ENCODE measurements at regions of chr11 and their contacts with region 1.

Region 1: DNA sequence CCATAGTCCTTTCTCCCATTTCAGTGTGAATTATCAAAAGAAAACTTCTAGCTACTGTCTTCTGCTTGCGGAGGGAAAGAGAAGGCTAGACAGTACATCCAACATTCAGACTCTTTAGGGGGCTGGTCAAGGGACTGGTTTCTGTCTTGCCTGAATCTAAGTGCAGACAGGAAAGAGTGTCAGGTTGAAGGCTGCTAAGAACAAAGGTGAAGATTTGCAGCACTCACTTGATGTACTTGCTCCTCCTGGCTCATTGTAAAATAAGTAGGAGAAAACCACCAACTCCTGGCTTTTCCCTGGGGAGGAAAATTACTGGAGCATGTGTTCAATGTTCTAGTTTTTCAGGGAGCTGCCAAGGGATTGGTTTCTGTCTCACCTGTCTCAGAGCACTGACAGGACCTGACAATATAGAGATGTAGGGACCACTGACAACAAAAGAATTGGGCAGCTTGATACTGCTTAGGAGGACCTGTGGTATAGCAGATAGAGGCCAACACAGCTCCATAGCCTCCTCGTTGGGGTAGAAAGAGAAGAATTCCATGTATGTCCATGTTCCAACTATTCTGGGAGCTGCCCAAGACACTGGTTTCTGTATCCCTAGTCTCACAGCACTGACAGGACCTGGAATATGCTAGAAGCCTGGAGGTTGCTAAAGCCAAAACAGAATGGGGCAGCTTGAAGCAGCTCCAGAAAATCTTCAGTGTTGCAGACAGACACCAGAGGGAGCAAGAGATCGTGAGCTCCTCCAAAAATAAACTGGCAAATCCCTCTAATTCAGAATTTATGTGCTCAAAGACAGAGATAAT is 39.7 kb upstream of the MMP12 start:
- DNase-seq: no peak
- H3K4me3 ChIP-seq: no peak overlapping the region
- H3K27me3 ChIP-seq: no peaks in the 10 kb centered on the region
- CTCF ChIP-seq: peak; percentile 80

Region 2: DNA sequence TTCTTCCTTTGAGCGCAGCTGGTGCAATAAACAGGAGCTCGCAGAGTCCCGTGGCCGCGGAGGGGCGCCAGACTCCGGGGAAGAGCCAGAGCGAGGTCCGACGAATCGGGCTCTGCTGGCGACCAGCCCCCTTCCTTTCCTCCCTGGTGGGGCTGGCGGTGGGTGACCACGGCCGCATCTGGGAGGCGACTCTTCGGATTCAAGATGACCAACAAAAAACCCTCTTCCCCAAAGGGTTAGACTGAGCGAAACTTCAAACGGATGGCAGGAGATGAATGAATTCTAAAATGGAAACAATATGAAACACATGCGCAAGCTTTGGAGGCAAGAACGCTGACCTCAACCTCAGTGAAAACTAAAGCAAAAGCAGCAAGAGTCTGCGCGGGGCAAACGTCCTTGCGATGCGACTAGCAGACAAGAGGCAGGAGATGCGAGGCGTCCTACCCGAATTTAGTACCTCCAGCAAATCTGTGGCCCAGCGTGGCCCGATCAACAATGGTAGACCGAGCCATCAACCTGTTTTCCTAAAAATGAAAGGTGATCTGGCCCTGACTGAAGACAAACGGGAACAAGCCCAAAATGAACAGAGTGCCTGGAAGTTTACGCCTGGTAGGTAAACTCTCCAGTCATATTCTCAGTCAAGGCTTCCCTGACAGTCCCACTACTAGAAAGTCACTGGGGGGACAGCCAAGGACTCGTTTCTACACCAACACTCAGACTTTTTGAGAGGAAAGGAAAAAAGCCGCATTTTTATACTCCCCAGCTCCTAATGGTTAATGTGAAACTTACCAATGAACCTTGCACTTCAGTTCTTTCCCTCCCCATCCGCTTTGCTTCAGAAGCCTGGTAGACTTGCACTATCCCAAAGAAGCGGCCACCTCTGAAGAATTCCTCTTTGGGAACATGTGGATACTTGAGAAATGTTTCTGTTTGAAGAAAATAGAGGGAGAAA is 82.7 kb before region 1 on chr11:
- CTCF ChIA-PET with region 1: interaction called, 31 read pairs
- POLR2A ChIA-PET with region 1: no interaction called
- DNase-seq: no peak
- H3K4me3 ChIP-seq: peak overlapping the region; percentile 43
- H3K27me3 ChIP-seq: no peaks in the 10 kb centered on the region
- CTCF ChIP-seq: peak; percentile 83

Region 3: DNA sequence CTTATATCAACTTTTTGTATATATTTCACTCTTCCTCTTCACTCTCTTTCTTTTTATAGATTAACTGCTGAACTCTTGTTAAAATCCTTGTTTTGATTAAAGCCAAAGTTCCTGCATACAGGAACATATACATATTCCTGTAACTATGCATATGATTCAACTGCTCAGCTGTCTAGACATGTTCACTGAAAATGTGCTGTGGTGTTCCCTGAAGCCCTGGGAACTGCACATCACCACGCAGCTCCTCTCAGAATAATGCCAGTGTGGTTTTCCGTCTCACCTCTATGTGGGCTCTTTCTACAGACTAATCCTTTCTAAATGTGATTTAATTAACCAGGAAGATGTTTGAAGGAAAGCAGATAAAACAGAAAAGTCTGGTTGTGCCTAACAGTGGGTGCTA is 14.1 kb before region 1 on chr11:
- CTCF ChIA-PET with region 1: interaction called, 14 read pairs
- POLR2A ChIA-PET with region 1: no interaction called
- DNase-seq: no peak
- H3K4me3 ChIP-seq: no peak overlapping the region
- H3K27me3 ChIP-seq: no peaks in the 10 kb centered on the region
- CTCF ChIP-seq: no peak

Region 4: GRCh38 chr11:102935514-102935913 is 21.1 kb after region 1 on chr11:
- CTCF ChIA-PET with region 1: interaction called, 52 read pairs
- POLR2A ChIA-PET with region 1: no interaction called
- DNase-seq: no peak
- H3K4me3 ChIP-seq: no peak overlapping the region
- H3K27me3 ChIP-seq: no peaks in the 10 kb centered on the region
- CTCF ChIP-seq: peak; percentile 18; the same call in 1 of the 2 replicates

Region 5: DNA sequence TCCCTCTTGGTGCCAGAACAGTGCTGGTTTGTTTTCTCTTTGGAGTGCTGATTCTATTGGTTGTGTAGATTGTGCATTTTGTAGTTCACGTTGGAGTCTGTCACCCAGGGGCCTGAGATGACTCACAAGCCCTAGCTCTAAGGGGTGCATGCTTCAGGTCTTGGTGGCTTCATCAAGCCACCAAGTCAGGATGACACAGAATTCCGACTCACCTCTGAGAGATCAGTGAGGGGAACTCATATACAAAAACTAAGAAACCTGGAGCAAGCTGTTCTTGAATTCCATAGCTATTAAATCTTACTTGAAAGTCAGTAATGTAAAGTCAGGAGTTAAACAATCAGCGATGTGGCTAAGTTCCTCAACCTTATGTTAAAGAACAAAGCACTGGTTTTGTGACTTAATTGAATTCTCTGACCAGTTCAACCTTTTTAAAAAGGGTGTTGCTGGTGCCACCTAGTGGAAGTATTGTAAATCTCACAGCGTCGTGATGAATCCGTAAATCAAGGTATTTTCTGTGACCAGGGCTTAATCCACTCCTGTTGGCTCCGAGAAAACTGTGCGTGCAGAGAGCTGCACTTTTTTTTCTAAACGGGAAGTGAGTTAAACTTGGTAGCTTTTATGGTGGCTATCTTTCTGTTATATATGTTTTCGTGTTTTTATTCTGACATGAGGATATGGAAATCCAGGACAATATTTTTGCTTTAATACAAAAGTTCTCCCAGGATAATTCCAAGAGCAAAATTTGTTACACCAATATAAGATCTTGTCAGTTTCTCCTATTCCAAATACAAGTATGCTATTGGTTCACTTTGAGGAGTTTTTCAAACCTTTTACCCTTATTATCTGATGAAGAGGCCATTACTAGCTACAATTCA is 26.5 kb after region 1 on chr11:
- CTCF ChIA-PET with region 1: interaction called, 52 read pairs
- POLR2A ChIA-PET with region 1: no interaction called
- DNase-seq: peak; percentile 22
- H3K4me3 ChIP-seq: no peak overlapping the region
- H3K27me3 ChIP-seq: no peaks in the 10 kb centered on the region
- CTCF ChIP-seq: peak; percentile 70

Region 6: GRCh38 chr11:102946237-102946636 is 31.8 kb after region 1 on chr11:
- CTCF ChIA-PET with region 1: interaction called, 52 read pairs
- POLR2A ChIA-PET with region 1: no interaction called
- DNase-seq: no peak
- H3K4me3 ChIP-seq: no peak overlapping the region
- H3K27me3 ChIP-seq: no peaks in the 10 kb centered on the region
- CTCF ChIP-seq: no peak

Region 7: DNA sequence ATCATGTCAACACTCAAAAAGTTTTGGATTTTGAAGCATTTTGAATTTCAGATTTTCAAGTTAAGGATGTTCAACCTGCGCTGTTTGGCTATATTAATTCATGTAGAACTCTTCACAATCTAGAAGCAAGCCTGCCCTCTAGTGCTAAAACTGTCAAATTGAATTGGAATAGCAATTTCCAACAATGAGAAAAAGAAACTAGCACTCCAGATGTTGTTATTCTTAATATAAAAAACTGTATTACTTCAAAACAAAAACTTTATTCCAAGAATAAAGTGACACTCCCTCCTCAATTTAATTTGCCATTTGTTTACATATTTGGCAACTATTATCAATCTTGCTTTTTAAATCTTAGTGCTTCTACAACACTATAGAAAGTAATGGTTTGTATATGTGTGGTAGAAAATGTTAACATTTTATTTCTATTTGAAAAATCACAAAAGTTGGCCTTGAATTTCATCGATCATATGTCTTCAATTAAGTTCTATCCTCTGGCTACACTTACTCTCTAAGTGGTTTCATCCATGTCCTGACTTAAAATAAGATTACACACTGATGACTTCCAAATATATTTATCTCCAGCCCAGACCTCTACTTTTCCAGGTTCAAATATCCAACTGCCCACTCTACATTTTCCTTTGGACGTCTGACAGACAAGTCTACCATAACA is 140.9 kb after region 1 on chr11:
- CTCF ChIA-PET with region 1: interaction called, 17 read pairs
- POLR2A ChIA-PET with region 1: no interaction called
- DNase-seq: no peak
- H3K4me3 ChIP-seq: no peak overlapping the region
- H3K27me3 ChIP-seq: no peaks in the 10 kb centered on the region
- CTCF ChIP-seq: peak; percentile 64